GM10248 (cell line): ENCODE measurements at regions of chr3 and their contacts with region 1.

Region 1: GRCh38 chr3:124559881-124560574 is 170.2 kb upstream of the UMPS start:
- DNase-seq: peak; percentile 77
- CTCF ChIP-seq: peak; percentile 86

Region 2: DNA sequence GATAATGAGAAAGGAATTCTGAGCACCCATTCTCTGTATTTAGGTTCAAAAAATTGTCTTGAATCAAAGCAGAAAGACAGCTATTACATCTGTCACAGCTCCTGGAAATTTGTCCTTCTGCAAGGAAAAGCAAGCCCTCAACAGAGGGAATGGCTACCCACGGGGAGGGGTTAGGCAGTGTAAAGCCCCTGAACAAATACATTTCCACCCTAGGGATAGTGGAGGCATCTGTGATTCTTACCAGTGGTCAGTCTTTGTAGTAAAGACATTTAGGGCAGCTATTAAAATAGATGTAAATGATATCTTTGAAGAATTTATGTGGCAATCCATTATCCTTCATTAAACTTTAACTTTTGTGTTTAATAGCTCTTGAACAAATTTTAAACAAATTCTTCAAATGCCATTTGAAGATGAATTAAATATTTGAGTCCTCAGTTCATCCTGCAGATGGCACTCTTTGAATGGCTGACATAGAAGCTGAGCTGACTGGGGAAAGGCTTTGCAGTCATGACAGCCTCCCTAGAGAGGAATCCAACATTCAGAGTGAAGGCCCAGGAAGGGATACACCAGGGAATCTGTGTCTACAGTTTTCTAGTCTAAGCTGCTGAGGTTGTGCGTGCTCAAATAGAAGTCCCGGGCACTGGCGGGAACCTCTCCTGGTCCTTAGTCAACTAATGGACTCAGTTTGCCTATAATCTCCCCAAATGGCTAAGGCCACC is 208.4 kb before region 1 on chr3:
- CTCF ChIA-PET with region 1: interaction called, 19 read pairs
- POLR2A ChIA-PET with region 1: no interaction called
- DNase-seq: peak; percentile 47
- CTCF ChIP-seq: peak; percentile 44

Region 3: DNA sequence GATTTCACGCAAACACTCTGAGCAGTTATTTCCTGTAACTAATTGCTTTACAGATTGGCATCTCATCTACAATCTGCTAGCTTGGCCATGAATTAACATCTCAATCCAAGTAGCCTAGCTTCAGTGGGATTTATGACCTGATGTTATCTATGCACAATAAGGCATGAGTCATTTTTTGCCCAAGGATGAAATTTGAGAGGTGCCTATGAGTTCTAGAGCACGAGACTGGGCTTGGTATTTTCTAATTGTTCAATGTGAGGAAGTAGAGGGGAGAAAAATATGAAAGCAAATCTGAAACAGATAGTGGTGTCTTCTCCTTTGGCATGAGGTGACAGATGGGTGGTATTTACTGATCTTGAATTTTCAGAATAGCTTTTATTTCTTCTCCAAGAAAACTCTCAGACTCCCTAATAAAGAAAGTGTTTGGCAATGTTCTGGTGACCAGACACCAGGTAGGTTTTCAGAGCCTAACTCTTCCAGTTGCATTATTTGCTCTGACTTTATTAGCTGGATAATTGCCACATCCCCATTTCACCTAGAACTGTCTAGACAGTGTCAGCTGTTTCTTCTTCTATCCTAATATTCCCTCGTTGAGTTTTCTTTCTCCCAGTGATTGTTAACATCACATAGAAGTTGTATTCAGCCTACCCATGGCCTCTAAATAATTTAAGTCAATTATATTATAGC is 130.8 kb before region 1 on chr3:
- CTCF ChIA-PET with region 1: no interaction called
- POLR2A ChIA-PET with region 1: no interaction called
- DNase-seq: no peak
- CTCF ChIP-seq: no peak

Region 4: GRCh38 chr3:124467980-124468902 is 91.8 kb before region 1 on chr3:
- CTCF ChIA-PET with region 1: interaction called, 11 read pairs
- POLR2A ChIA-PET with region 1: no interaction called
- DNase-seq: peak; percentile 68
- CTCF ChIP-seq: peak; percentile 95

Region 5: GRCh38 chr3:124478830-124479229 is 81.2 kb before region 1 on chr3:
- CTCF ChIA-PET with region 1: no interaction called
- POLR2A ChIA-PET with region 1: no interaction called
- DNase-seq: no peak
- CTCF ChIP-seq: no peak

Region 6: DNA sequence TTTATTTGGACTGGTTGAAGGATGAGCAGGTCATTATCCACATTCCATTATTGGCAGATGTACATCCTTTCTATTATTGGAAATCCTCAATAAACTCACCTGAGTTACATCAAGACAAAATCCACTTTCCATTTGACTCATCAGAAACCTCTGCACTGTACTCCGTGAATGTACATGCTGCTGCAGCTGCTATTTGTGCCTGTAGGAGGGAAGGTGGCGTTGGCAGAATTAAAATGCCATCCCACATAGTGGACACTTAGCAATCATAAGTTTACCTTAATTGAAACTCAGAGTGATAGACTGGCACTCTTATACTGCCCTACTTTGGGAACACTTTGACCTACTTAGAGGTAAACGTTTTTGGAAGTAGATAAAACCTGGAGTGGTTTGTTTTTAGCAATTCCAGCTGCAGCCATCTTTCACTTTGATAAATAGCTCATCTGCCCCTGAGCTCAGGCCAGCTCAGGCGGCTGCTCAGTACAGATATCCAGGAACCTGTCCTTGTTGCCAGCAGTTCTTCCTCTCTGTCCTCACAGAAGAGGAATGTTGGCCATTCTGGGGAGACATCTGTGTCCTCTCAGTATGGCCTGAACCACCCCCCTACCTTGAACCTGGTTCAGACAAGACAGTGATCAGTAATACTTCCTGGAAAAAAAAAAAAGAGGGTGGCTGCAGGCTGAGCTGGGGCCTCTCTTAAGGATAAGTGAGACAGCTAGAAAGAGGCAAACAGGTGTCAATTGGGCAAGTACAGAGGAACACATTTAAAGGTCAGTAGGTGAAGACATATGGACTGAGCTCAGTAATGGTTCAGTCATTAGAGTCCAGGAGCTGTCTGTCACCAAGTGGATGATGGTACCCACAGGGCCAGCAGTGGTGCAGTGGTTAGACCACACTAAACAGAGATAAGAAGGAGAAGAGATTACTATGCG is 16.8 kb after region 1 on chr3:
- CTCF ChIA-PET with region 1: interaction called, 67 read pairs
- POLR2A ChIA-PET with region 1: no interaction called
- DNase-seq: no peak
- CTCF ChIP-seq: no peak

Region 7: DNA sequence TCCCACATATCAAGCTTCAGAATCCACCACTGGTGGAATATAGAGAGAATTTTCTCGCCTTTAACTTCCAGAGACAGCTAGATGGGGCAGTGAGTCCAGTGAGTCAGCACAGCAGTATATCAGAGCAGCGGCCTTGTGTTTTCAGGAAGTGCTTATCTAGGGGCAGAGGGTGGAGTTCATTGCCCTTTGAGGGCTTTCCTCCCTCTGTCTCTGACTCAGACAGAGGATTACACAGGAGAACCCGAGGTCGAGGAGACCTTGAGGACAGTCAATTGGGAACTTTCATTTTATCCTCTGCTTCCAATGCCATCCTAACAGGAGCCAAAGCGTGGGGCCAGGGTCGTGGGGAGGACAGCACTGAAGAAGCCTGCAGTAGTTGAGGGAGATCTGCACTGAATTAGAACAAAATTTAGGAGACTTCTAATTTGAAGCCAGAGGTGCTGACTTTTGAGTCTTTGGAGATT is 60.6 kb after region 1 on chr3:
- CTCF ChIA-PET with region 1: interaction called, 17 read pairs
- POLR2A ChIA-PET with region 1: no interaction called
- DNase-seq: peak; percentile 47
- CTCF ChIP-seq: peak; percentile 42

Region 8: DNA sequence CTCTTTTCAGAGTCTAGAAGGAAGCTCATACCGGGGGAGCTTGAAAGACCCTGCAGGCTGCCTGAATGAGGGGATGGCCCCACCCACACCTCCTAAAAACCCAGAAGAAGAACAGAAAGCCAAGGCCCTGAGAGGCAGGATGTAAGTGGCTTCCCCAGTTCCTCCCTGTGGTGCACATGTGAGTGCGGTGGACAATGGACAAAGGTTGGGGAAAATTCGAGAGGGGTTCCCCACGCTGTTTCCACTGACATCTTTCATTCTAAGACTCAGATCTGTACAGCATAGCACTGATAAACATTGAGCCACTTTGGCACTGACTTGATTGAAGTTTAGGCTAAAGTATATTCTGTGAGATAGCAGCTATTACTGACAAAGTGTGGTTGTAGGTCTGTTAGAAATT is 90.8 kb after region 1 on chr3:
- CTCF ChIA-PET with region 1: interaction called, 13 read pairs
- POLR2A ChIA-PET with region 1: no interaction called
- DNase-seq: peak; percentile 57
- CTCF ChIP-seq: no peak

Region 9: DNA sequence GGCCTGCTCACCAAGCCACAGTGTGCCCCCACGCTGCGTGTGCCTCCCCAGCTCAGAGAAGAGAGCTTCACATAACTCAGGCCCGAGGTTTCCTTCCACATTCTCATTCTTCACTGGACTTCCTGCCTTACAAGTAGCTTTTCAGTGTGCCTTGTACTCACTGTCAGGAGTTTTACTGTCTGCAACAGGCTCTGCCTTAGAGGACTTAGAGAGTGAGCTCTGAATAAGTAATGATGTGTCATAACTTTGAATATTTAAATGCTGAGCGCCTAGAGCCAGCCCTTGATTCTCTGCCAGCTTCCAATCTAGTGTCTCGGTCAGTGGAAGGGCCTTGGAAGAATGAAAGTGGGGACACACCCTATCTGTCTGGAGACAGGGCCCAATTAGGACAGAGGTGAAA is 285.4 kb after region 1 on chr3:
- CTCF ChIA-PET with region 1: no interaction called
- POLR2A ChIA-PET with region 1: no interaction called
- DNase-seq: no peak
- CTCF ChIP-seq: no peak